A673 (cell line): ENCODE measurements at regions of chr3 and their contacts with region 1.

Region 1: DNA sequence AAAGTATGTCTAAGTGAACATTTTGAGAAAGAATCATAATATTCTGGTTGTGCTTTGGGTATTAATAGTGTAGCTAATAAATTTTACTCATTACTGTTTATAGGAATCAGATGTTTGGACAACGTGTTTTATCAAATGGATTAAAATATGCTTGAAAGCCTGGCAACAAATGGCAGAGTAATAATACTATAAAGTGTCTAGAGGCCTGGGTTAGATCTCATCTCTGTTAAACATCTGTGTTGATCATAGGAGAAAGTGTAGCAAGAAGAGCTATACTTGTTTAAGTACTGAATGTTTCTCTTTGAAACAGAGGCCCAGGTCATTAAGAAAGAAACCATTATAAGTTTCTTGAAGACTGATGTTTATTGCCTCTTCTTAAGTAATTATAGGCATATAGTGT is 30.5 kb downstream of the VPS8 start:
- DNase-seq: no peak
- H3K4me3 ChIP-seq: no peak overlapping the region
- H3K27ac ChIP-seq: no peak overlapping the region
- H3K4me1 ChIP-seq: peaks cover 4% of the 10 kb centered on the region
- H3K27me3 ChIP-seq: no peaks in the 10 kb centered on the region
- CTCF ChIP-seq: no peak

Region 2: GRCh38 chr3:184808021-184808420 is 34.4 kb before region 1 on chr3:
- CTCF ChIA-PET with region 1: no interaction called
- POLR2A ChIA-PET with region 1: interaction called, 11 read pairs
- intact Hi-C with region 1: no loop called
- DNase-seq: peak; percentile 33
- H3K4me3 ChIP-seq: no peak overlapping the region
- H3K27ac ChIP-seq: no peak overlapping the region
- H3K4me1 ChIP-seq: no peaks in the 10 kb centered on the region
- H3K27me3 ChIP-seq: no peaks in the 10 kb centered on the region
- CTCF ChIP-seq: peak; percentile 37

Region 3: DNA sequence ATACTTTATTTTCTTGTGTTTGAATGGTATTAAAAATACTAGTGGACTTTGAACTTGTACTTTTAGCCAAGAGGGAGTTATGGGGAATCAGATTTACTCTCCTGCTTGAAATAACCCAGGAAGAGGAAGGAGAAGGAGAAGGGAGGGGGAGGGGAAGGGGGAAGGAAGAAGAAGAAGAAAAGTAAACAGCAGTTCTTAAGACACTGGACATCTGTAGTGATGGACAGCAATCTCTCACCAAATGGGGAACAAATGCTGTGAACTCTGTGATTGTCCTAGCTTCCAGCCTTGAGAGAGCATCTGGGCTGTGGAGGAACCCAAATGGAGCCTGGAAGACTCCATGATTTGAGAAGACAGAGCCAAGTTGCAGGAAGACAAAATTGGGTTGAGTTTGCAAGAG is 21.6 kb after region 1 on chr3:
- CTCF ChIA-PET with region 1: no interaction called
- POLR2A ChIA-PET with region 1: no interaction called
- intact Hi-C with region 1: no loop called
- DNase-seq: no peak
- H3K4me3 ChIP-seq: no peak overlapping the region
- H3K27ac ChIP-seq: no peak overlapping the region
- H3K4me1 ChIP-seq: no peaks in the 10 kb centered on the region
- H3K27me3 ChIP-seq: no peaks in the 10 kb centered on the region
- CTCF ChIP-seq: no peak

Region 4: DNA sequence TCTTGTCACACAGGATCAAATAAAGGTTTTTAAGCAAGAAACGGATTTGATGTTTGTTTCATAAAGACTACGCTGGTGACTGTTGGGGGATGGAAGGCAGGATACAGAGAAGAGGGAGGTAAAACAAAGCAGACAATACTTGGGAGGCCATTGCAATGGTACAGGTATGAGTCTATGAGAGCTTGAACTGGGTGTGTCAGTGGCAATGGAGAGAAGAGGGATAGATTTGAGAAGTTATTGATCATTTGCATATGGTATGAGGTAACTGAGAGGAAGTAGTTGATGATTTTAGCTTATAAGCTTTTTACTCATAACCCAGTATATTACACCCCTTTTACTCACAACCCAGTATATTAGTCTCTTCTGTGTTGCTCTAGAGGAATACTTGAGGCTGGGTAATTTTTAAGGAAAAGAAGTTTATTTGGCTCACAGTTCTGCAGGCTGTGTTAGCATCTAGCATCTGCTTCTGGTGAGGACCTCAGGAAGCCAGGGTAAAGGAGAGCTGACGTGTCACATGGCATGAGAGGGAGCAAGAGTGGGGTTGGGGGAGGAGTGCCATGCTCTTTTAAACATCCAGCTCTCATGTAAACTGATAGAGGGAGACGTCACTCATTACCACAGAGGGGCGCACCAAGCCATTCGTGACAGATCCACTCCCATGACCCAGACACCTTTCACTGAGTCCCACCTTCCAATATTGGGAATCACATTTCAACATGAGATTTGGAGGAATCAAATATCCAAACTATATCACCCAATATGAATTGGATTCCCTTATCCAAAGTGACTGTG is 123.4 kb after region 1 on chr3:
- CTCF ChIA-PET with region 1: no interaction called
- POLR2A ChIA-PET with region 1: no interaction called
- intact Hi-C with region 1: no loop called
- DNase-seq: no peak
- H3K4me3 ChIP-seq: no peak overlapping the region
- H3K27ac ChIP-seq: no peak overlapping the region
- H3K4me1 ChIP-seq: no peaks in the 10 kb centered on the region
- H3K27me3 ChIP-seq: no peaks in the 10 kb centered on the region
- CTCF ChIP-seq: no peak

Region 5: GRCh38 chr3:185781759-185782158 is 939.3 kb after region 1 on chr3:
- CTCF ChIA-PET with region 1: no interaction called
- POLR2A ChIA-PET with region 1: no interaction called
- intact Hi-C with region 1: no loop called
- DNase-seq: no peak
- H3K4me3 ChIP-seq: no peak overlapping the region
- H3K27ac ChIP-seq: no peak overlapping the region
- H3K4me1 ChIP-seq: peaks cover 13% of the 10 kb centered on the region
- H3K27me3 ChIP-seq: no peaks in the 10 kb centered on the region
- CTCF ChIP-seq: no peak